ENCODE measurements at regions of chr6 and their contacts with region 1.

Region 1: GRCh38 chr6:135145063-135145800 is 35.9 kb upstream of the MYB start:
- DNase-seq: peak; percentile 49
- H3K4me3 Mint-ChIP-seq: no peak overlapping the region
- H3K27ac Mint-ChIP-seq: no peak overlapping the region
- H3K4me1 Mint-ChIP-seq: peaks cover 6% of the 10 kb centered on the region
- H3K27me3 Mint-ChIP-seq: no peaks in the 10 kb centered on the region
- CTCF ChIP-seq: peak; percentile 65

Region 2: GRCh38 chr6:134967711-134968110 is 177.5 kb before region 1 on chr6:
- CTCF ChIA-PET with region 1: no interaction called
- POLR2A ChIA-PET with region 1: no interaction called
- intact Hi-C with region 1: no loop called
- DNase-seq: no peak
- H3K4me3 Mint-ChIP-seq: no peak overlapping the region
- H3K27ac Mint-ChIP-seq: no peak overlapping the region
- H3K4me1 Mint-ChIP-seq: no peaks in the 10 kb centered on the region
- H3K27me3 Mint-ChIP-seq: no peaks in the 10 kb centered on the region
- CTCF ChIP-seq: no peak

Region 3: GRCh38 chr6:135158397-135158796 is 13.2 kb after region 1 on chr6:
- CTCF ChIA-PET with region 1: interaction called, 23 read pairs
- POLR2A ChIA-PET with region 1: no interaction called
- intact Hi-C with region 1: no loop called
- DNase-seq: no peak
- H3K4me3 Mint-ChIP-seq: no peak overlapping the region
- H3K27ac Mint-ChIP-seq: no peak overlapping the region
- H3K4me1 Mint-ChIP-seq: no peaks in the 10 kb centered on the region
- H3K27me3 Mint-ChIP-seq: no peaks in the 10 kb centered on the region
- CTCF ChIP-seq: no peak

Region 4: GRCh38 chr6:135257631-135258405 is 112.6 kb after region 1 on chr6:
- CTCF ChIA-PET with region 1: interaction called, 4 read pairs
- POLR2A ChIA-PET with region 1: no interaction called
- intact Hi-C with region 1: loop called (anchors 1 kb)
- DNase-seq: peak; percentile 8
- H3K4me3 Mint-ChIP-seq: no peak overlapping the region
- H3K27ac Mint-ChIP-seq: no peak overlapping the region
- H3K4me1 Mint-ChIP-seq: no peaks in the 10 kb centered on the region
- H3K27me3 Mint-ChIP-seq: peaks cover 15% of the 10 kb centered on the region
- CTCF ChIP-seq: no peak

Region 5: GRCh38 chr6:135397172-135397952 is 252.1 kb after region 1 on chr6:
- CTCF ChIA-PET with region 1: interaction called, 12 read pairs
- POLR2A ChIA-PET with region 1: no interaction called
- intact Hi-C with region 1: no loop called
- DNase-seq: no peak
- H3K4me3 Mint-ChIP-seq: no peak overlapping the region
- H3K27ac Mint-ChIP-seq: no peak overlapping the region
- H3K4me1 Mint-ChIP-seq: no peaks in the 10 kb centered on the region
- H3K27me3 Mint-ChIP-seq: no peaks in the 10 kb centered on the region
- CTCF ChIP-seq: no peak

Region 6: GRCh38 chr6:135423649-135424128 is 278.5 kb after region 1 on chr6:
- CTCF ChIA-PET with region 1: interaction called, 80 read pairs
- POLR2A ChIA-PET with region 1: interaction called, 3 read pairs
- intact Hi-C with region 1: loop called (anchors 1 kb)
- DNase-seq: peak; percentile 46
- H3K4me3 Mint-ChIP-seq: no peak overlapping the region
- H3K27ac Mint-ChIP-seq: no peak overlapping the region
- H3K4me1 Mint-ChIP-seq: no peaks in the 10 kb centered on the region
- H3K27me3 Mint-ChIP-seq: no peaks in the 10 kb centered on the region
- CTCF ChIP-seq: peak; percentile 70